ENCODE measurements at regions of chr20 and their contacts with region 1.

Region 1: GRCh38 chr20:63495741-63496595 is 2.9 kb downstream of the EEF1A2 start:
- DNase-seq: no peak
- H3K4me3 ChIP-seq: no peak overlapping the region
- H3K27ac ChIP-seq: no peak overlapping the region
- H3K4me1 ChIP-seq: no peaks in the 10 kb centered on the region
- H3K27me3 ChIP-seq: peaks cover 24% of the 10 kb centered on the region
- CTCF ChIP-seq: peak; percentile 91

Region 2: GRCh38 chr20:63442100-63442493 is 53.9 kb before region 1 on chr20:
- CTCF ChIA-PET with region 1: no interaction called
- POLR2A ChIA-PET with region 1: no interaction called
- intact Hi-C with region 1: loop called (anchors 10 kb)
- DNase-seq: peak; percentile 44 to 79
- H3K4me3 ChIP-seq: no peak overlapping the region
- H3K27ac ChIP-seq: no peak overlapping the region
- H3K4me1 ChIP-seq: no peaks in the 10 kb centered on the region
- H3K27me3 ChIP-seq: peaks cover 39% of the 10 kb centered on the region
- CTCF ChIP-seq: peak; percentile 81